HAP-1 (cell line): ENCODE measurements at regions of chr6 and their contacts with region 1.

Region 1: DNA sequence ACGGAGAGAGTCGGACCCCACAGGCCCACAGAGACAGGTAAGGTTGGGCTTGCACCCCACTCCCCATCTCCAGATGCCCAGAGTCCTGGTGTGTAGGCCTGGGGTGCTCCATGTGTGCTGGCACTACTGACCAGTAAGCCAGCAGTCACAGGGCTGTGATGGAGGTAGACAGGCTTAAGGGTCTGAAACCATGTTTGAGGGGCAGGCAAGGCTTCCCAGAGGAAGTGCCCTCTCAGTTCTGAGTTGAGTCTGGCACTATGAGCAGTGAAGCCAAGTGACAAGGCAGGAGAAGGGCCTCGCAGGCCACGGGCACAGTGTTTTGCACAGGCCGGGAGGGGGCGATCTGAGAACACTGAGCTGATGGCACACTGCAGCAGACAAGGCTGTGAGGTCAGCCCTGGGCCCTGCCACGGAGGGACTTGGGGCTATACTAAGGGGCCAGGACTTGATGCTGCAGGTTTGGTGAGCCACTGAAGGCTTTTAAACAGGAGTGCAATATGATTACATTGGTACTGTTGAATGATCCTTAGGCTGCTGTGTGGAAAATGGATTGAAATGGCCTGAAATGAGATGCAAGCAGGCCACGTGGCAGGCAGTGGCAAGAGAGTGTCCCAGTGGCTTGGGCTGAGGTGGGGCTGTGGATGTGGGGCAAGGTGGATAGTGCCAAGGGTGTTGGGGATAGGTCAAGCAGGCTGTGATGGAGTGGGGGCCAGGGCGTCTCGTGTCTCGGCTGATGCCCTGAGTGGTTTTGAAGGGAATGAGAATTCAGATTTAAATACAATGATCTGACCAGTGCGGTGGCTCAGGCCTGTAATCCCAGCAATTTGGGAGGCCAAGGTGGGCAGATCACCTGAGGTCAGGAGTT is 20.3 kb downstream of the TTBK1 start:
- DNase-seq: peak; percentile 62 to 87
- H3K4me3 ChIP-seq: no peak overlapping the region
- H3K4me1 ChIP-seq: no peaks in the 10 kb centered on the region
- H3K27me3 ChIP-seq: no peaks in the 10 kb centered on the region

Region 2: GRCh38 chr6:43334466-43335095 is 71.0 kb after region 1 on chr6:
- in situ Hi-C with region 1: loop called (anchors 5 kb)
- DNase-seq: peak; percentile 32 to 81
- H3K4me3 ChIP-seq: no peak overlapping the region
- H3K4me1 ChIP-seq: no peaks in the 10 kb centered on the region
- H3K27me3 ChIP-seq: no peaks in the 10 kb centered on the region

Region 3: DNA sequence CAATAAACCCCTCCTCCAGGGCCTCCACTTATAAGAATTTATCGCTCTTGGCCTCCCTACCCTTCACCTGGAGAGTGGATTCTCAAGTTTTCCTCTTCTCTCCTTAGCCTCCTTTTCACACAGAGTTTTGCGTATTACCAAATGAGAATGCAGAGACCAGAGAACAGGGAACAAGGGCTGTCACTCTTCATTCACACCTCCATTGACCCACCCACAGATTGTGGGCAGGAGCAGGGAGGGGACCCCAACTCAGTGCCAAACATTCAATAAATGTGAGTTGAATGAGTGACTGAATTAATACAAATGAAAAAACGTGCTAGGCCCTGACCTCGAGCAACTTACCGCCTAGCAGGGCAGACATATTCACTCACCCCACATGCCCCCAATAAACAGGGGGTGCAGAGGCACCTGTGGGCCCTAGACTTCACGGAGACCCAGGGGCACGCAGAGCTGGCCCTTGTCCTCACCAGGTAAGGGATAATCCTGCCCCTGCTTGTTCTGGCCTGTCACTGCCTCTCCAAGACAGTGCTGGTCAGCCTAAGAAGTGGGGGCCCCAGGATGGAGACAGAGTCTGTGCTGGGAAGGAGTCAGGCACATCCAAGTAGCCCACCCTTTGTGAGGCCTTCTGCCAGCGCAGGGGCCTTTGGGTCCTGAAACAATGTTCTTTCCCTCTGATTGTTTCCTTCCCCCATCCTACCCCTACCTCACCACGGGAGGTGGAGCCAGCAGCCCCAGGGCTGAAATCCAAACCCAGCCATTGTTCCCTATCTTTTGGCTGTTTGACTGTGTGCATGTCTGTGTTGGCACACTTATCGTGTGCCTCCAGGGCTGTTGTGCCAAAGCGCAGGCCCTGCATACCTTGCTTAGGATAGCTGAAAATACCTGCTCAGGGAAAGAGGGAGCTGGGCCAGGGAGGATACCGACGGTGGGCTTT is 205.5 kb after region 1 on chr6:
- in situ Hi-C with region 1: no loop called
- DNase-seq: no peak
- H3K4me3 ChIP-seq: no peak overlapping the region
- H3K4me1 ChIP-seq: no peaks in the 10 kb centered on the region
- H3K27me3 ChIP-seq: no peaks in the 10 kb centered on the region

Region 4: DNA sequence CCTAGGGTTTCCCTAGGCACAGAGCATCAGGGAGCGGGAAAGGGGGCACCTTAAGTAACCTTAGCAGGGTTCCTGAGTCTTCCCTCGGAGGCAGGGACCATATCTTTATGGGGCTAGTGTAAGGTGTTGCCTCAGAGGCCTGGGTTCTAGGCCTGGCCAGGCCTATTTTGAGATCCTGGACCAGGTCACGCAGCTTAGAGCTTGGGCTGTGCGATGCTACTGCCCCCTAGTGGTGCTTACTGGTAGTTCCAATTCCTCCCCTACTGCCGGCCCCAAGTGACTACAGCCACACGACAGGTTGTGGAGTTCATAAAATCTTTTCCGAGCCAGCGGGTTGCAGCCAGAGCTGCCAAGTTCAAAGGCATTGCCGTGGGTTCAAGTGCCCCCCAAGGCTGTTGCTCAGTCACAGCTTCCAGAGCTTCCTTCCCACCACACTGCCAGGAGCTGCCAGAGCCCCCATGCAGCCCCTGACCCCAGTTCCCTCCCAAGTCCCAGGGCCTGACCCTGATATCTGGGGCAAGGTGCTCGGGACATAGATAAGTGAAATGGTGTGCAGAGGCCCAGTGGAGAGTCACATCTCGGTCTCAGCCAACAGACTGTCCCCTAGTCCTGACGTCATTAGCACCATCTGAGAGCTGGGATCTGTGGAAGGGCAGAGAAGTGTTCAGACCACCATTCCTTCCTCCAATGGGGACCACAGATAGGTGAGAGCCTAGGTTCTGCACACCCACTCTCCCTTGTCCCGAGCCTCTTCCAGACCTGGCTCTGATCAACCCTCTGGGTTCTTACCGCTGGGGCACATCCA is 243.3 kb after region 1 on chr6:
- in situ Hi-C with region 1: loop called (anchors 5 kb)
- DNase-seq: peak; percentile 71 to 87
- H3K4me3 ChIP-seq: no peak overlapping the region
- H3K4me1 ChIP-seq: peaks cover 6% of the 10 kb centered on the region; the same call in 1 of the 2 replicates
- H3K27me3 ChIP-seq: no peaks in the 10 kb centered on the region